Psoas muscle (tissue), 8 donors: ENCODE measurements at regions of chr21 and their contacts with region 1.

Region 1: GRCh38 chr21:38805328-38806152 is at the start of gene ETS2:
- DNase-seq: peak; percentile 90 to 95
- ATAC-seq: peak; percentile 86 to 90 (median 86)
- H3K4me3 ChIP-seq: peak within 1 kb of the TSS; percentile 76
- H3K27ac ChIP-seq: peak within 1 kb of the TSS; percentile 96
- H3K4me1 ChIP-seq: peaks cover 10% of the 10 kb centered on the region
- H3K27me3 ChIP-seq: no peaks in the 10 kb centered on the region
- CTCF ChIP-seq: no peak
- total RNA-seq, gene ETS2: 37.0 to 494 (median 96.6) TPM

Region 2: DNA sequence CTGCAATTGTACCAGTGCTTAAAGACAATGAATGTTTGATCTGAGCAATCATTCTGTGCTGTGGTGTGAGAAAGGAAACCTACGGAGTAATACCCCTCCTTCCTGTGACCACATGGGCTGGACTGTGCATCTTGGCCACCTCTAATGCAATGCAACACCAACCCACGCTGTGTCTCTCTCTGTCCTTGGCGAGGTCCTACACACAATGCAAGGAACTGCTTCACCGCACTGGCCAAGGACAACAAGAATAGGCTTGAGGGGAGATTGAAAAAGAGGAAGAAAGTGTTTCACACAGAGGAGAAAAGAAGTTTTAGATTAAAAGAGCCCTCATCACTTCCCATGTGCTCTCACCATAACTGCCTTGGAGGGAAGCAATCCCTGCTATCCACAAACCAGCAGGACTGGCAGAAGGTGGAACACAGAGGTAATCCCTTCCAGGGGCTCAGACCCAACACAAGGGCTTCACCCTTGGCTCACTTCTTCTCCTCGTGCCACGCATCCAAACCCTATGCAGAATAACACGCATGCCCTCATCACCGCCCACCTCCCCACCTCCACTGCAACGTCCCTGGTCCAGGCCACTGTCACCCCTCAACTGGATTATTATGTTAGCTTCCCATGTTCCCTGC is 194.8 kb before region 1 on chr21:
- intact Hi-C with region 1: no loop called
- DNase-seq: no peak
- ATAC-seq: no peak
- H3K4me3 ChIP-seq: no peak overlapping the region
- H3K27ac ChIP-seq: no peak overlapping the region
- H3K4me1 ChIP-seq: no peaks in the 10 kb centered on the region
- H3K27me3 ChIP-seq: peaks cover 0 to 5% (median 0%) of the 10 kb centered on the region in 3 donors
- CTCF ChIP-seq: no peak

Region 3: GRCh38 chr21:38679531-38679930 is 126.0 kb before region 1 on chr21:
- intact Hi-C with region 1: no loop called
- DNase-seq: no peak
- ATAC-seq: peak in 1 of 4 donors; percentile 44
- H3K4me3 ChIP-seq: no peak overlapping the region
- H3K27ac ChIP-seq: no peak overlapping the region
- H3K4me1 ChIP-seq: no peaks in the 10 kb centered on the region
- H3K27me3 ChIP-seq: peaks cover 2 to 37% (median 4%) of the 10 kb centered on the region in 3 donors
- CTCF ChIP-seq: no peak

Region 4: GRCh38 chr21:38733973-38734546 is 71.5 kb before region 1 on chr21:
- intact Hi-C with region 1: loop called (anchors 1 to 2 kb)
- DNase-seq: peak; percentile 87 to 93
- ATAC-seq: peak; percentile 87 to 96 (median 93)
- H3K4me3 ChIP-seq: peak overlapping the region; percentile 49
- H3K27ac ChIP-seq: peak overlapping the region; percentile 34
- H3K4me1 ChIP-seq: peaks cover 5% of the 10 kb centered on the region
- H3K27me3 ChIP-seq: peaks cover 0 to 5% (median 0%) of the 10 kb centered on the region in 3 donors
- CTCF ChIP-seq: peak; percentile 90

Region 5: GRCh38 chr21:38903690-38904139 is 98.2 kb after region 1 on chr21:
- intact Hi-C with region 1: loop called in 1 of 2 experiments (anchors 1 kb)
- DNase-seq: peak; percentile 71 to 87
- ATAC-seq: peak; percentile 78 to 81 (median 78)
- H3K4me3 ChIP-seq: no peak overlapping the region
- H3K27ac ChIP-seq: peak overlapping the region; percentile 96
- H3K4me1 ChIP-seq: peaks cover 43% of the 10 kb centered on the region
- H3K27me3 ChIP-seq: no peaks in the 10 kb centered on the region
- CTCF ChIP-seq: no peak

Region 6: GRCh38 chr21:38985568-38986378 is 180.2 kb after region 1 on chr21:
- intact Hi-C with region 1: loop called (anchors 5 to 10 kb)
- DNase-seq: peak; percentile 67 to 78
- ATAC-seq: peak; percentile 22 to 36 (median 24)
- H3K4me3 ChIP-seq: peak overlapping the region; percentile 53
- H3K27ac ChIP-seq: peak overlapping the region; percentile 73
- H3K4me1 ChIP-seq: peaks cover 68% of the 10 kb centered on the region
- H3K27me3 ChIP-seq: no peaks in the 10 kb centered on the region
- CTCF ChIP-seq: no peak

Region 7: DNA sequence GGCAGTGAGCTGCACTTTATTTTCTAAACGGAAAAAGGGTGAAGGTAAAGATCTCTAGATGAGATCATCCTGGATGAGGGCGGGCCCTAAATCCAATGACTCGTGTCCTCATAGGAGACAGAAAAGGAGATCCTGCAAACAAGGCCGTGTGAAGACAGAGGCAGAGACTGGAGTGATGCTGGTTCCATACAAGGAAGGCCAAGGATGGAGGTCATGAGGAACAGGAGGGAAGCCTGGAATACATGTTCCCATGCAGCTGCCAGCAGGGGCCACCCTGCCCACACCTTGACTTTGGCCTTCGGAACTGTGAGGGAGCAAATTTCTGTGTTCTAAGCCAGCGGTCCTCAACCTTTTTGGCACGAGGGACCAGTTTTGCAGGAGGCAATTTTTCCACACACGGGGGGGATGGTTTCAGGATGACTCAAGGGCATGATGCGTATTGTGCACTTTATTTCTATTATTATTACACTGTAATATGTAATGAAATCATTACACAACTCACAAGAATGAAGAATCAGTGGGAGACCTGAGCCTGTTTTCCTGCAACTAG is 283.4 kb after region 1 on chr21:
- intact Hi-C with region 1: loop called in 1 of 2 experiments (anchors 1 kb)
- DNase-seq: peak in 1 of 2 donors; percentile 39
- ATAC-seq: peak; percentile 26 to 53 (median 42)
- H3K4me3 ChIP-seq: peak overlapping the region; percentile 66
- H3K27ac ChIP-seq: peak overlapping the region; percentile 97
- H3K4me1 ChIP-seq: peaks cover 27% of the 10 kb centered on the region
- H3K27me3 ChIP-seq: no peaks in the 10 kb centered on the region
- CTCF ChIP-seq: no peak

Region 8: GRCh38 chr21:39183237-39184007 is 377.9 kb after region 1 on chr21 and contains the start of gene PSMG1:
- intact Hi-C with region 1: no loop called
- DNase-seq: peak; percentile 96 to 97
- ATAC-seq: peak; percentile 96 to 97 (median 96)
- H3K4me3 ChIP-seq: peak within 1 kb of the TSS; percentile 77
- H3K27ac ChIP-seq: peak within 1 kb of the TSS; percentile 92
- H3K4me1 ChIP-seq: peaks cover 24% of the 10 kb centered on the region
- H3K27me3 ChIP-seq: no peaks in the 10 kb centered on the region
- CTCF ChIP-seq: no peak
- total RNA-seq, gene PSMG1: 20.5 to 50.3 (median 38.3) TPM